ENCODE measurements at regions of chr19 and their contacts with region 1.

Region 1: GRCh38 chr19:45478454-45479238 is 10.8 kb downstream of the FOSB start:
- DNase-seq: peak; percentile 85 to 95 (median 87)
- H3K4me3 ChIP-seq: peak overlapping the region in 3 of 4 donors; percentile 36 to 60 (median 58)
- H3K27ac ChIP-seq: peak overlapping the region; percentile 86 to 95 (median 92)
- H3K4me1 ChIP-seq: peaks cover 0 to 6% of the 10 kb centered on the region in 2 donors
- H3K27me3 ChIP-seq: peaks cover 4% of the 10 kb centered on the region
- CTCF ChIP-seq: peak; percentile 94 to 99 (median 98)
- POLR2A ChIP-seq: peak; percentile 25 to 62

Region 2: DNA sequence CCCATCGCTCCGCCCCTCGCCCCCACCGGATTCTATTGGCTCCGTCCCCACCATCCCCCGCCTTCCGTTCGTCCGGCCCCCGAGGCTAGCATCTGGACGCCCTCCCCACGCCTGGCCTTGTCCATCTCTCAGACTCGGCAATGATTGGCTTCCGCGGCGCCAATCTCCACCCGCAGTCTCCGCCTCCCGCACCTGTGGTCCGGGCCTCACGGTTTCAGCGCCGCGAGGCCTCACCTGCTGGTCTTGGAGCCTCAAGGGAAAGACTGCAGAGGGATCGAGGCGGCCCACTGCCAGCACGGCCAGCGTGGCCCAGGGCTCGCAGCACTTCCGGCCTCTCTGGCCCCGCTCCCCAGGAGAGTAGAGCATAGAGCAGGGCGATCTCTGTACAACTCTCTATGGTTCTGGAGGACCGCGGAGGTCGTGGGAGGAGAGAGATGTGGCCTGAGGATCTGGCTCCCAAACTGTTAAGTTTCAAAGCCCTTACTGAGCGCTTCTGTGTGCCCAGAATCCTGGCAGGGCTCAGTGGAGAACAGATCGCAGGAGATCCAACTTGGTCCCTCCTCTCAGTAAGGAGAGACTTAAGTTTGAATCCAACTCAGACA is 55.0 kb before region 1 on chr19 and contains the start of gene ERCC1:
- intact Hi-C with region 1: no loop called
- DNase-seq: peak in 4 of 7 donors; percentile 97 to 98 (median 98)
- H3K4me3 ChIP-seq: peak within 1 kb of the TSS in 3 of 4 donors; percentile 28 to 80 (median 36)
- H3K27ac ChIP-seq: peak within 1 kb of the TSS; percentile 57 to 98 (median 90)
- H3K4me1 ChIP-seq: peaks cover 28 to 39% of the 10 kb centered on the region in 2 donors
- H3K27me3 ChIP-seq: no peaks in the 10 kb centered on the region
- CTCF ChIP-seq: no peak
- POLR2A ChIP-seq: peak; percentile 69 to 73
- total RNA-seq, gene ERCC1: 63.6 to 107 (median 86.1) TPM

Region 3: GRCh38 chr19:45439569-45440254 is 38.9 kb before region 1 on chr19:
- intact Hi-C with region 1: loop called (anchors 2 to 5 kb)
- DNase-seq: peak; percentile 85 to 91 (median 87)
- H3K4me3 ChIP-seq: peak overlapping the region in 2 of 4 donors; percentile 45 to 83
- H3K27ac ChIP-seq: peak overlapping the region in 4 of 5 donors; percentile 88 to 96 (median 92)
- H3K4me1 ChIP-seq: peaks cover 17 to 19% of the 10 kb centered on the region in 2 donors
- H3K27me3 ChIP-seq: no peaks in the 10 kb centered on the region
- CTCF ChIP-seq: peak; percentile 95 to 100 (median 97)
- POLR2A ChIP-seq: peak; percentile 23 to 34

Region 4: DNA sequence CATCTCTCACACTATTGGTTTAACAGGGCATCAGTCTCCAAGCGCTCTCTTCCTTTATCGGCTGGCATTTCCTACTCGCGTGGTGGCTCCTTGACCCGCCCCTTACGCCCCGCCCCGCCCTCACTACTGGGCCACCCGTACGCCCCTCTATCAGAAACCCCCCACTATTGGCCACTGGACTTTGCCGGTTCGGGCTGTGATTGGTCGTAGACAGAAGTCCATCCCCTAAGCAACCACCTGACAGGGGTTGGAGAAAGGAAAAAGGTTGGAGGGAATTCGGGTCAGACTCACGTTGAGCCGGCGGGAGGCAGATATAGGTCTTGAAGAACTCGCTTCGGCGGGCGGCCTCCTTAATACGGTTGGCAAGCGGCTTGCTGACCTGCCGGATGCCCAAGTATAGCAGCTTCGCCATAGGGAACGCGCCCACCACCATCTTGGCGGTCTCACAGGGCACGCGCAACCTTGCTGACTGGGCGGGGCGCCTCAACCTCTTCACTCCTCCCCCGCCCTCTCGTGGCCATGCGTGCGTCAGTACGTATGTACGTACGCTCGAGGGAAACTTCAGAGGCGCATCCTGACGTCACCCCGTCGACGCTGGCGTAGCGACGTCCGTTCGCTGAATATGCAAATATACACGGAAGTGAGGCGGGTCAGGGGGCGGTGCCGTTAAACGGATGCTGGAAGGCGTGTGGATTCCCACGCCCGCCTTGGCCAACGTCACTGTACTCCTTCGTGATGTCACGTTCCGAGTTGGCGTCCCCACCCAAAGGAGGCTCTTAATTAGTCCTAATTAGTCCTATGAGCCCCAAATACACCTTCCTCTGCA is 105.9 kb after region 1 on chr19 and contains the start of gene OPA3:
- intact Hi-C with region 1: no loop called
- DNase-seq: peak; percentile 99 to 100 (median 100)
- H3K4me3 ChIP-seq: peak within 1 kb of the TSS; percentile 59 to 82 (median 72)
- H3K27ac ChIP-seq: peak within 1 kb of the TSS; percentile 82 to 99 (median 97)
- H3K4me1 ChIP-seq: peaks cover 4 to 19% of the 10 kb centered on the region in 2 donors
- H3K27me3 ChIP-seq: no peaks in the 10 kb centered on the region
- CTCF ChIP-seq: peak in 1 of 6 experiments; percentile 23
- POLR2A ChIP-seq: peak; percentile 77 to 82
- total RNA-seq, gene OPA3: 6.5 to 34.1 (median 17.4) TPM

Region 5: GRCh38 chr19:45701676-45702075 is 223.0 kb after region 1 on chr19:
- intact Hi-C with region 1: no loop called
- DNase-seq: no peak
- H3K4me3 ChIP-seq: no peak overlapping the region
- H3K27ac ChIP-seq: no peak overlapping the region
- H3K4me1 ChIP-seq: no peaks in the 10 kb centered on the region
- H3K27me3 ChIP-seq: no peaks in the 10 kb centered on the region
- CTCF ChIP-seq: no peak
- POLR2A ChIP-seq: no peak

Measured in adrenal gland (tissue), 19 donors.